Right ventricle myocardium inferior (tissue), 1 donor: ENCODE measurements at regions of chr10 and their contacts with region 1.

Region 1: GRCh38 chr10:85060944-85061343 is 732.6 kb downstream of the CCSER2 start:
- DNase-seq: no peak
- ATAC-seq: no peak

Region 2: GRCh38 chr10:85043207-85043606 is 17.7 kb before region 1 on chr10:
- intact Hi-C with region 1: loop called (anchors 1 kb)
- DNase-seq: peak; percentile 30
- ATAC-seq: no peak